ENCODE measurements at regions of chr1 and their contacts with region 1.

Region 1: GRCh38 chr1:207181838-207182237 is 77.8 kb downstream of the C4BPA start:
- DNase-seq: no peak
- H3K4me3 ChIP-seq: no peak overlapping the region
- H3K27ac ChIP-seq: no peak overlapping the region
- H3K4me1 ChIP-seq: no peaks in the 10 kb centered on the region
- H3K27me3 ChIP-seq: no peaks in the 10 kb centered on the region
- CTCF ChIP-seq: peak; percentile 45

Region 2: GRCh38 chr1:207069858-207070506 is 111.9 kb before region 1 on chr1:
- CTCF ChIA-PET with region 1: no interaction called
- POLR2A ChIA-PET with region 1: no interaction called
- intact Hi-C with region 1: no loop called
- DNase-seq: no peak
- H3K4me3 ChIP-seq: no peak overlapping the region
- H3K27ac ChIP-seq: no peak overlapping the region
- H3K4me1 ChIP-seq: no peaks in the 10 kb centered on the region
- H3K27me3 ChIP-seq: no peaks in the 10 kb centered on the region
- CTCF ChIP-seq: no peak

Region 3: DNA sequence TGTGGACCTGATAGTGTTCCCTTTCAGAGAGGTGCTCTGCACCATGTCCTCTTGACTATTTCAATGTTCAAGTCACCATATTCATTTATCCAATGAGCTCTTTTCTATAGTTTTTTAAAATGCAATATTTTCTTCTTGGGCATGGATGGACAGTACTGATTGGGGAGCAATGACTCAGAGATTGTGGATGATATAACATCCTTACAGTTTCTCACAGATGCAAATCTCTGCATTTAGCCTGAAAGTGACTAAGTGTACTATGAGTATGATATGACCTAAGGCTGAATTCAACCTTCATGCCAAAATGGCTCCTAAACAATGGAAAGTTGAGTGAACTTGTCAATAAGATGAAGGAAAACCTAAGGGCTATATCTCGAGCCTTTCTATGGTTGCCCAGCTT is 41.3 kb before region 1 on chr1:
- CTCF ChIA-PET with region 1: no interaction called
- POLR2A ChIA-PET with region 1: no interaction called
- intact Hi-C with region 1: no loop called
- DNase-seq: no peak
- H3K4me3 ChIP-seq: no peak overlapping the region
- H3K27ac ChIP-seq: no peak overlapping the region
- H3K4me1 ChIP-seq: 0 out of 2 replicates have a peak, but pooled peaks cover 4% of the 10 kb centered on the region
- H3K27me3 ChIP-seq: no peaks in the 10 kb centered on the region
- CTCF ChIP-seq: no peak

Region 4: DNA sequence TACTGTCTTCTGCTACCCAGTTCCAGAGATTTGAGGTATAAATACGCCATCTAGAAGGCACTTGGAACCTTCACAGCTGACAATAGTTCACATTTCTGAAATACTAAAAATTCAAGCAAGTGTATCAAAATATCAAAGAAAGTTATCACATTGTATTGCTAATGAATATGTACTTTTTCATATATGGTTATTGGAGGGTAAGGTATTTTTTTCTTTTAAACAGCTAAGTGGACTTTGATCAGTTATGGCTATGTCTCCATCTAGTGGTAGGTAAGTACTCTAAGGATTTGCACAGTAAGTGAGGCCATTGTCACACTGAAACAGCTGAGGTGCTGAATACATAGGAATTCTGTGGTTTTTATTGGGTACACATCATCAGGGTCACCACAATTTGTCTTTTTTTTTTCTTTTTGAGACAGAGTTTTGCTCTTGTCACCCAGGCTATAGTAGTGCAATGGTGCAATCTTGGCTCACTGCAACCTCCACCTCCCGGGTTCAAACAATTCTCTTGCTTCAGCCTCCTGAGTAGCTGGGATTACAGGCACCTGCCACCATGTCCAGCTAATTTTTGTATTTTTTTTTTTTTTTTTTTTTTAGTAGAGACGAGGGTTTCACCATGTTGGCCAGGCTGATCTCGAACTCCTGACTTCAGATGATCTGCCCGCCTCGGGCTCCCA is 223.1 kb after region 1 on chr1:
- CTCF ChIA-PET with region 1: no interaction called
- POLR2A ChIA-PET with region 1: no interaction called
- intact Hi-C with region 1: loop called (anchors 1 kb)
- DNase-seq: peak in 1 of 2 experiments; percentile 76
- H3K4me3 ChIP-seq: no peak overlapping the region
- H3K27ac ChIP-seq: no peak overlapping the region
- H3K4me1 ChIP-seq: peaks cover 11% of the 10 kb centered on the region
- H3K27me3 ChIP-seq: no peaks in the 10 kb centered on the region
- CTCF ChIP-seq: peak; percentile 87

Measured in PC-9 (cell line).